Activated naive CD4-positive, alpha-beta T cell treated with anti-CD3 and anti-CD28 coated beads for 36 hours (primary cell): ENCODE measurements at regions of chr9 and their contacts with region 1.

Region 1: GRCh38 chr9:19456996-19457692 is 48.3 kb downstream of the ACER2 start:
- DNase-seq: peak; percentile 71
- H3K4me3 Mint-ChIP-seq: peak overlapping the region; percentile 28
- H3K27ac Mint-ChIP-seq: no peak overlapping the region
- H3K4me1 Mint-ChIP-seq: peaks cover 8% of the 10 kb centered on the region
- H3K27me3 Mint-ChIP-seq: no peaks in the 10 kb centered on the region

Region 2: GRCh38 chr9:17531642-17532254 is 1925.4 kb before region 1 on chr9:
- CTCF ChIA-PET with region 1: no interaction called
- intact Hi-C with region 1: loop called (anchors 5 kb)
- DNase-seq: peak; percentile 52
- H3K4me3 Mint-ChIP-seq: no peak overlapping the region
- H3K27ac Mint-ChIP-seq: no peak overlapping the region
- H3K4me1 Mint-ChIP-seq: no peaks in the 10 kb centered on the region
- H3K27me3 Mint-ChIP-seq: no peaks in the 10 kb centered on the region

Region 3: DNA sequence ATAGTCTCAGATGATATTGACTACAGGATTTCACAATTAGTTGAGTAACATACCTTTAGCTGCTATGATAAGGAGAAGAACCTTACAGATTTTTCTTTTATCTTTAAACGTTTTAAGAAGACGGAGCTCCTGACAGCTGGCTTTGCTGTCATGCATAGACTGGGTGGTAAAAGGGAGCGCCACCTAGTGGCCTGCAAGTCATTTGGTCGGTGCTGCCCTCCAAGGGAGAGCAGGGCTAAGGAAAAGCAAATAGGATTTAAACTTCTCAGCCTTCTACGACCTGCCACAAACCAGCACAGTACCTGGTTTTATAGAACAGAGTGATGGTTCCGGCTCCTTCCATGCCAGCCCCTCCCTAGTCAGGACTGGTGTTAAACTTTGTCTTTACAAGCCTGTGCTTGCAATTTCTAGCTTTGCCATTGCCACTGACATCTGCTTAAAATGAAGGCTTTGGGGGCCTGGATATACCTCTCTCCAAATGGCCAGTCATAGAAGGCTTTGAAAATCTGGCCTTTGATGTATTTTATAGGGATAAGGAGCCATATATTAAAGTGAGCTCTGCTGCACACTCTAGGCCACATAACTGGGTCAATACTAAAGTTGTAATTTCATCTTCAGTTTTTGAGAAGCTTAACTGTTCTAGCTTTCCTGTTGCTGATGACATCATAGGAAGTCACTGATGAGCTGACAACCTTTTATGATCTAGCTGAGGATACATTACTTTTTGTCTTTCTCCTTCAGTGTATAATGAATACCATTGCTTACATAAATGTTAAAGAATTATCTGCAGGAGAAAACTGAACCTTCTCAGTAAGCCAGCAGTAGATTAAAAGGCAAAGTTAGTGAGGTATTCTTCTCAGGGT is 1014.3 kb before region 1 on chr9:
- CTCF ChIA-PET with region 1: no interaction called
- intact Hi-C with region 1: loop called (anchors 5 kb)
- DNase-seq: peak; percentile 73
- H3K4me3 Mint-ChIP-seq: no peak overlapping the region
- H3K27ac Mint-ChIP-seq: no peak overlapping the region
- H3K4me1 Mint-ChIP-seq: peaks cover 4% of the 10 kb centered on the region
- H3K27me3 Mint-ChIP-seq: peaks cover 18% of the 10 kb centered on the region

Region 4: GRCh38 chr9:19085295-19085694 is 371.8 kb before region 1 on chr9:
- CTCF ChIA-PET with region 1: interaction called, 13 read pairs
- intact Hi-C with region 1: loop called (anchors 1 kb)
- DNase-seq: no peak
- H3K4me3 Mint-ChIP-seq: no peak overlapping the region
- H3K27ac Mint-ChIP-seq: no peak overlapping the region
- H3K4me1 Mint-ChIP-seq: no peaks in the 10 kb centered on the region
- H3K27me3 Mint-ChIP-seq: no peaks in the 10 kb centered on the region

Region 5: DNA sequence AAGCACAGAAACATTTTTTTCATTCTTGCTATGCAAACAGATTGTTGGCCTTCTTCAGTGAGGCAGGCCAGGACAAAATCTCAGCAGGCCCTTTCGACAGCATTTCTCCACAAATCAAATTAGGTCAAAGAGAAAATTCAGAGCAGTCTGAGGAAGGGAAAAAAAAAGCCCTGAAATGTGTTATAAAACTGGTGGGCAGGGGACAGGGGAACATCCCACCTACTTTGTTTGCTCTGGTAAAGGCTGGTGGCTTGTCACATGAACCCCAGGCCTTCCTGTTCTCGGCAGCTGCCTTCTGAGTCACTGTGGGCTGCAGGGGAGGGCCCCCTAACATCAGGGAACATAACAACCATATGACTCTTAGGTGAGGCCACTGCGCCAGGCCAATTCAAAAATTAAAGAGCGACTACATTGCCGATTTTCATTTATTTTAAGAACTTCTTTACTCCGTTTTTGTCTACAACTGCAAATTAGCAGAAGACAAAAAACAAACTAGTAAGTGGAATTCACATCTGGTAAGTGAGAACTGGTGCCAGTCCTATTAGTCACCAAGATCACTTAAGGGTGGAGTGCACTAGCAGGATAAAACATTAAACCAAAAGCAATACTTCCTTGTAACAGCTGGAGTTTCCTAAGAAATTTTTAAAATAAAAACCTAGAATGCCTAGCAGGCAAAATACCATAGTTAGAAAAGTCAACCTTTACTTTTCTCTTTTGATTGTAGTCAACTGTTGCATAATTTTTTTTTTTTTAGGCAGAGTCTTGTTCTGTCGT is 272.8 kb before region 1 on chr9:
- CTCF ChIA-PET with region 1: interaction called, 6 read pairs
- intact Hi-C with region 1: loop called (anchors 1 kb)
- DNase-seq: peak; percentile 92
- H3K4me3 Mint-ChIP-seq: peak overlapping the region; percentile 47
- H3K27ac Mint-ChIP-seq: peak overlapping the region; percentile 89
- H3K4me1 Mint-ChIP-seq: peaks cover 14% of the 10 kb centered on the region
- H3K27me3 Mint-ChIP-seq: no peaks in the 10 kb centered on the region

Region 6: GRCh38 chr9:19408693-19409400 is 48.3 kb before region 1 on chr9 and contains the start of gene ACER2:
- CTCF ChIA-PET with region 1: interaction called, 3 read pairs
- intact Hi-C with region 1: loop called (anchors 1 kb)
- DNase-seq: peak; percentile 94
- H3K4me3 Mint-ChIP-seq: peak within 1 kb of the TSS; percentile 87
- H3K27ac Mint-ChIP-seq: no peak within 1 kb of the TSS
- H3K4me1 Mint-ChIP-seq: peaks cover 14% of the 10 kb centered on the region
- H3K27me3 Mint-ChIP-seq: no peaks in the 10 kb centered on the region
- total RNA-seq, gene ACER2: 2.0 to 2.2 TPM